A549 (cell line): ENCODE measurements at regions of chr20 and their contacts with region 1.

Region 1: DNA sequence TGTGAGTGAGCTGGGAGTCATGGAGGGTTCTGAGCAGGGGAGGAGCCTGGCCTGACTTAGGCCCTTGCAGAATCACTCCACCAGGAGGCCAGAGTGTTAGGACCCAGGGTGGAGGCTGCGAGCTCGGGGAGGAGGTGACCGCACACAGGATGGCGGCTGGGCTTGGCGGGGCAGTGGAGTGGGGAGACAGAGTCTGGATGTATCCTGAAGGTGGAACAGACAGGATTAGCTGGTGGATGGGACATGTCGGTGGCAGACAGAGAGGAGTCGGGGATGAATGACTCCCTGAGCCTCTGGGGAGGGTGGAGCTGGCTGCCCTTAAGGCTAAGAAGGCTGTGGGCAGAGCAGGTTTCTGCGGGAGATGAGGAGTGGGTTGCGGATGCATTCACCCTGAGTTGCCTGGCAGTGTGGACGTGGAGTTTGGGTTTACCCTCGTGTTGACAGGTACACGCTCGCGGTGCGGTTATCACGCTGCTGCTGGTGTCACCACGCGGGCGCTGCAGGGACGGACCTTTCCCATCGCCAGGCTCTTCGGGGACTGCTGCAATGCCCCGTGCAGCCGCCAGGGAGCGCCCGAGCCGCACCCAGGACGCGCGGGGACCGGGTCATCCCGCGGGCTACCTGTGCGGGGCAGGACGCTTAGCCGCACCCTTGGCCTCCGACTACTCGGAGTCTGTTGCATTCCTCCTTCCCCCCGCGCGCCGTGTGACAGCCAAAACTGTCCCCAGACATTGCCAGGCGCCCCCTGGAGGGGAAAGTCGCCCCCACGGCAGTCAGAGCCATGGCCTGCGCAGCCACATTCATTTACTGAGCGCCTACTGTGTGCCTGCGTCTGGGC is 43.0 kb upstream of the PTGIS start:
- DNase-seq: peak; percentile 92 to 98
- ATAC-seq: peak; percentile 87 to 92
- H3K4me3 ChIP-seq: peak overlapping the region; percentile 52
- H3K27ac ChIP-seq: peak overlapping the region; percentile 85 to 88
- H3K4me1 ChIP-seq: peaks cover 27% of the 10 kb centered on the region
- CTCF ChIP-seq: peak; percentile 97
- EP300 ChIP-seq: no peak
- POLR2A ChIP-seq: peak; percentile 54
- RAD21 ChIP-seq: peak; percentile 97 to 100

Region 2: GRCh38 chr20:49484180-49485140 is 126.5 kb before region 1 on chr20:
- CTCF ChIA-PET with region 1: interaction called, 16 read pairs
- POLR2A ChIA-PET with region 1: no interaction called
- DNase-seq: peak; percentile 83 to 86
- ATAC-seq: peak; percentile 91 to 98
- H3K4me3 ChIP-seq: peak overlapping the region; percentile 51
- H3K27ac ChIP-seq: peak overlapping the region; percentile 48 to 67; a peak in 4 of 6 replicates
- H3K4me1 ChIP-seq: peaks cover 11% of the 10 kb centered on the region; the same call in 2 of the 3 replicates
- CTCF ChIP-seq: peak; percentile 89
- EP300 ChIP-seq: no peak
- POLR2A ChIP-seq: no peak
- RAD21 ChIP-seq: peak; percentile 75 to 92

Region 3: GRCh38 chr20:49567421-49568334 is 43.2 kb before region 1 on chr20 and contains the start of gene PTGIS:
- CTCF ChIA-PET with region 1: interaction called, 11 read pairs
- POLR2A ChIA-PET with region 1: no interaction called
- DNase-seq: no peak
- ATAC-seq: no peak
- H3K4me3 ChIP-seq: no peak within 1 kb of the TSS
- H3K27ac ChIP-seq: peak within 1 kb of the TSS in 1 of 2 experiments; percentile 60; a peak in 3 of 6 replicates
- H3K4me1 ChIP-seq: no peaks in the 10 kb centered on the region
- CTCF ChIP-seq: no peak
- EP300 ChIP-seq: no peak
- POLR2A ChIP-seq: no peak
- RAD21 ChIP-seq: no peak
- polyA plus RNA-seq, gene PTGIS: 0.03 and 0.07 TPM in 2 replicates

Region 4: GRCh38 chr20:49631061-49631788 is 20.3 kb after region 1 on chr20:
- CTCF ChIA-PET with region 1: interaction called, 14 read pairs
- POLR2A ChIA-PET with region 1: interaction called, 3 read pairs
- DNase-seq: no peak
- ATAC-seq: peak; percentile 26 to 58; a peak in 4 of 6 replicates
- H3K4me3 ChIP-seq: no peak overlapping the region
- H3K27ac ChIP-seq: peak overlapping the region in 1 of 2 experiments; percentile 61; a peak in 3 of 6 replicates
- H3K4me1 ChIP-seq: peaks cover 35% of the 10 kb centered on the region; the same call in 2 of the 3 replicates
- CTCF ChIP-seq: no peak
- EP300 ChIP-seq: no peak
- POLR2A ChIP-seq: no peak
- RAD21 ChIP-seq: no peak

Region 5: GRCh38 chr20:49685809-49686208 is 74.9 kb after region 1 on chr20:
- CTCF ChIA-PET with region 1: interaction called, 25 read pairs
- POLR2A ChIA-PET with region 1: no interaction called
- DNase-seq: no peak
- ATAC-seq: peak; percentile 48 to 70; a peak in 4 of 6 replicates
- H3K4me3 ChIP-seq: no peak overlapping the region
- H3K27ac ChIP-seq: peak overlapping the region; percentile 98
- H3K4me1 ChIP-seq: peaks cover 100% of the 10 kb centered on the region
- CTCF ChIP-seq: no peak
- EP300 ChIP-seq: no peak
- POLR2A ChIP-seq: no peak
- RAD21 ChIP-seq: no peak

Region 6: GRCh38 chr20:49821870-49822331 is 211.0 kb after region 1 on chr20:
- CTCF ChIA-PET with region 1: interaction called, 13 read pairs
- POLR2A ChIA-PET with region 1: no interaction called
- DNase-seq: no peak
- ATAC-seq: peak in 1 of 2 experiments; percentile 43; a peak in 1 of 6 replicates
- H3K4me3 ChIP-seq: no peak overlapping the region
- H3K27ac ChIP-seq: peak overlapping the region in 1 of 2 experiments; percentile 32; a peak in 1 of 6 replicates
- H3K4me1 ChIP-seq: peaks cover 35% of the 10 kb centered on the region
- CTCF ChIP-seq: no peak
- EP300 ChIP-seq: no peak
- POLR2A ChIP-seq: no peak
- RAD21 ChIP-seq: peak in 1 of 2 experiments; percentile 35; a peak in 3 of 5 replicates

Region 7: GRCh38 chr20:49941456-49941855 is 330.5 kb after region 1 on chr20:
- CTCF ChIA-PET with region 1: no interaction called
- POLR2A ChIA-PET with region 1: no interaction called
- DNase-seq: no peak
- ATAC-seq: no peak
- H3K4me3 ChIP-seq: no peak overlapping the region
- H3K27ac ChIP-seq: no peak overlapping the region
- H3K4me1 ChIP-seq: peaks cover 30% of the 10 kb centered on the region
- CTCF ChIP-seq: no peak
- EP300 ChIP-seq: no peak
- POLR2A ChIP-seq: no peak
- RAD21 ChIP-seq: no peak